GM12878 (cell line): ENCODE measurements at regions of chr7 and their contacts with region 1.

Region 1: GRCh38 chr7:33109005-33109757 is at the start of gene RP9:
- DNase-seq: no peak
- ATAC-seq: peak; percentile 89
- H3K4me3 ChIP-seq: peak within 1 kb of the TSS; percentile 96
- H3K27ac ChIP-seq: peak within 1 kb of the TSS; percentile 45
- H3K4me1 ChIP-seq: peaks cover 11% of the 10 kb centered on the region; the same call in 1 of the 2 replicates
- H3K27me3 ChIP-seq: no peaks in the 10 kb centered on the region; a peak in 1 of 4 replicates
- CTCF ChIP-seq: peak; percentile 36 to 65 (median 52); a peak in 4 of 6 replicates
- EP300 ChIP-seq: no peak
- POLR2A ChIP-seq: peak; percentile 89
- RAD21 ChIP-seq: peak; percentile 34
- polyA plus RNA-seq, gene RP9: 7.6 to 9.6 TPM

Region 2: GRCh38 chr7:32694182-32694581 is 415.0 kb before region 1 on chr7:
- CTCF ChIA-PET with region 1: interaction called, 13 read pairs
- POLR2A ChIA-PET with region 1: no interaction called
- RAD21 ChIA-PET with region 1: interaction called, 4 read pairs
- SMC1A ChIA-PET with region 1: interaction called, 11 read pairs
- in situ Hi-C with region 1: loop called (anchors 10 kb)
- intact Hi-C with region 1: loop called (anchors 2 kb)
- DNase-seq: no peak
- ATAC-seq: no peak
- H3K4me3 ChIP-seq: no peak overlapping the region
- H3K27ac ChIP-seq: no peak overlapping the region
- H3K4me1 ChIP-seq: 0 out of 2 replicates have a peak, but pooled peaks cover 3% of the 10 kb centered on the region
- H3K27me3 ChIP-seq: no peaks in the 10 kb centered on the region
- CTCF ChIP-seq: no peak
- EP300 ChIP-seq: no peak
- POLR2A ChIP-seq: no peak
- RAD21 ChIP-seq: no peak

Region 3: DNA sequence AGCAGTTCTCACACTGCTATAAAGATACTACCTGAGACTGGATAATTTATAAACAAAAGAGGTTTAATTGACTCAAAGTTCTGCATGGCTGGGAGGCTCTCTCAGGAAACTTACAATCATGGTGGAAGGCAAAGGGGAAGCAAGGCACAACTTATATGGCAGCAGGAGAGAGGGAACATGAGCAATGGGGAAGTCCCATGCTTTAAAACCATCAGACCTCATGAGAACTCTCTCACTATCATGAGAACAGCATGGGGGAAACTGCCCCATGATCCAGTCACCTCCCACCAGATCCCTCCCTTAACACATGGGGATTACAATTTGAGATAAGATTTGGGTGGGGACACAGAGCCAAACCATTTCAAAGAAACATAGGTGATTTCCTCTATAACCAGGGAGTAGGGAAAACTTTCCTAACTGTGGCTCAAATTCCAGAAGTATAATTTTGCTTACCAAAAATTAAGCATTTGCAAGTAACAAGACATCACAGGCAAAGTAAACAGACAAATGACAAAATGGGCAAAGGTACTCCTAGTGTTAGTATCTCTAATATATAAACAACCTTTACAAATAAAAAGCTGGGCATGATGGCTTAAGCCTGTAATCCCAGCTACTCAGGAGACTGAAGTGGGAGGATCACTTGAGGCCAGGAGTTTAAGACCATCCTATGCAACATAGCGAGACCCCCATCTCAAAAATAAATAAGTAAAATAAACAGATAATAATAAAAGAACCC is 305.6 kb before region 1 on chr7:
- CTCF ChIA-PET with region 1: interaction called, 25 read pairs
- POLR2A ChIA-PET with region 1: no interaction called
- RAD21 ChIA-PET with region 1: interaction called, 15 read pairs
- SMC1A ChIA-PET with region 1: interaction called, 11 read pairs
- in situ Hi-C with region 1: no loop called
- intact Hi-C with region 1: loop called (anchors 2 kb)
- DNase-seq: no peak
- ATAC-seq: no peak
- H3K4me3 ChIP-seq: no peak overlapping the region
- H3K27ac ChIP-seq: no peak overlapping the region
- H3K4me1 ChIP-seq: no peaks in the 10 kb centered on the region
- H3K27me3 ChIP-seq: no peaks in the 10 kb centered on the region
- CTCF ChIP-seq: no peak
- EP300 ChIP-seq: no peak
- POLR2A ChIP-seq: no peak
- RAD21 ChIP-seq: no peak

Region 4: GRCh38 chr7:32900433-32900995 is 208.7 kb before region 1 on chr7:
- CTCF ChIA-PET with region 1: no interaction called
- POLR2A ChIA-PET with region 1: no interaction called
- RAD21 ChIA-PET with region 1: no interaction called
- SMC1A ChIA-PET with region 1: no interaction called
- in situ Hi-C with region 1: no loop called
- intact Hi-C with region 1: no loop called
- DNase-seq: no peak
- ATAC-seq: no peak
- H3K4me3 ChIP-seq: no peak overlapping the region
- H3K27ac ChIP-seq: no peak overlapping the region
- H3K4me1 ChIP-seq: no peaks in the 10 kb centered on the region
- H3K27me3 ChIP-seq: no peaks in the 10 kb centered on the region
- CTCF ChIP-seq: no peak
- EP300 ChIP-seq: no peak
- POLR2A ChIP-seq: no peak
- RAD21 ChIP-seq: no peak

Region 5: DNA sequence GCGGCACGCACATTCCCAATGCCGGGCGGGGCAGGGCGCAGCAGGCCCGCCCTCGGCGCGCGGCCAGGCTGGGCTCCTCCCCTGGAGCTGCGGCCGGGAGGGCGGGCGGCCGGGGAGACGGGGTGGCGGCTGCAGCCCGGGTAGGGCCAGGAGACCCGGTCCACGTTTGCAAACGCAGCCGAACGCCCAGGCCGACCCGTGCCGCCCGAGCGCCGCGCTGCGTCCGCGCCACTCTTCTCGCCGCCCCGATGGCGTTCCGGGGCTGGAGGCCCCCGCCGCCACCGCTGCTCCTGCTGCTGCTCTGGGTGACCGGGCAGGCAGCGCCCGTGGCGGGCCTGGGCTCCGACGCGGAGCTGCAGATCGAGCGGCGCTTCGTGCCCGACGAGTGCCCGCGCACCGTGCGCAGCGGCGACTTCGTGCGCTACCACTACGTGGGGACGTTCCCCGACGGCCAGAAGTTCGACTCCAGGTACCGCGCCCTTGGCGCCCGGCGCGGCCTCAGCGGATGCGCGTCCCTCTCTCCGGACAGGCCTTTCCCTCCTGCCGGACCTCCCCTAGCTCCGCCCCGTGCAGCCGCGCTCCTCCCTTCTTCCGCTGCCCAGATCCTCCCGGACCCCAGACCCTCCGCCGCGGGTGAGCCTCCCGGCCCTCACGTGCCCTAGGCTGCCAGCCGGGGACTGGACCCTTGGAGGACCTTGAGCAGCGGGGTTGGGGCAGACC is 151.7 kb before region 1 on chr7 and contains the start of gene FKBP9:
- CTCF ChIA-PET with region 1: no interaction called
- POLR2A ChIA-PET with region 1: no interaction called
- RAD21 ChIA-PET with region 1: no interaction called
- SMC1A ChIA-PET with region 1: no interaction called
- in situ Hi-C with region 1: no loop called
- intact Hi-C with region 1: loop called (anchors 5 kb)
- DNase-seq: no peak
- ATAC-seq: peak; percentile 40; the same call in 1 of the 3 replicates
- H3K4me3 ChIP-seq: peak within 1 kb of the TSS; percentile 68
- H3K27ac ChIP-seq: no peak within 1 kb of the TSS
- H3K4me1 ChIP-seq: no peaks in the 10 kb centered on the region
- H3K27me3 ChIP-seq: peaks cover 0 to 5% of the 10 kb centered on the region in 2 experiments; a peak in 2 of 4 replicates
- CTCF ChIP-seq: no peak
- EP300 ChIP-seq: no peak
- POLR2A ChIP-seq: peak; percentile 46
- RAD21 ChIP-seq: no peak
- polyA plus RNA-seq, gene FKBP9: 1.0 to 1.3 TPM

Region 6: DNA sequence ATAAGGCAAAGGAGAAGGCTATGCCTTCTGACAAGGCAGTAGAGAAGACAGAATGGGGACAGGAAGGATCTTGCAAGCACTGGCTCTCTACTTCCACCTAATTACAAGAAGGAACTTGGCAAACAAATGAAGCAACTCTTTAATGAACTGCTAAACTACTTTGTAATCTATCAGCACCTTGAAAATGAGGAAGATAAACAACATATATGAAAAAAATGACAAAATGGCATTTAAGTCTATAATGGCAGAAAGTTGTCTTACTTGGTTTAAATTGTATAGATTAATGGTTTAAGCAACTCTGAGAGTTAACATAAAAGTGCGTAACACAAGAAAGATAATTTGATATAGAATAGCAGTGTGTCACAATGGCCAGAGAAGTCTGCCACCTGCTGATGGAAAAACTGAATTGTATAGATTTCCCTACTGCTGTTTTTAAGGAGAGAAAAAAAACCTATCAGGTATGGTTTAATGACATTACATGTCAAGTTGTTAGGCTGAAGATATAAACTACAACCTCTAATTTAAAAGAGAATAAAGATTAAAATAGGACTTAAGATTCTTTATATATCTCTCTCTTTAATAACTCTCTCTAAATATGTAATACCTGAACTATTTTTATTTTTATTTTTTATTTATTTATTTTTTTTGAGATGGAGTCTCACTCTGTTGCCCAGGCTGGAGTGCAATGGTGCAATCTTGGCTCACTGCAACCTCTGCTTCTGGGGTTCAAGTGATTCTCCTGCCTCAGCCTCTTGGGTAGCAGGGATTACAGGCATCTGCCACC is 58.5 kb before region 1 on chr7:
- CTCF ChIA-PET with region 1: interaction called, 31 read pairs
- POLR2A ChIA-PET with region 1: interaction called, 9 read pairs
- RAD21 ChIA-PET with region 1: interaction called, 12 read pairs
- SMC1A ChIA-PET with region 1: interaction called, 16 read pairs
- in situ Hi-C with region 1: no loop called
- intact Hi-C with region 1: no loop called
- DNase-seq: no peak
- ATAC-seq: peak; percentile 67
- H3K4me3 ChIP-seq: peak overlapping the region; percentile 25; the same call in 1 of the 2 replicates
- H3K27ac ChIP-seq: peak overlapping the region; percentile 56; the same call in 1 of the 2 replicates
- H3K4me1 ChIP-seq: peaks cover 21% of the 10 kb centered on the region
- H3K27me3 ChIP-seq: no peaks in the 10 kb centered on the region
- CTCF ChIP-seq: peak; percentile 50 to 62 (median 58)
- EP300 ChIP-seq: no peak
- POLR2A ChIP-seq: no peak
- RAD21 ChIP-seq: peak; percentile 69

Region 7: DNA sequence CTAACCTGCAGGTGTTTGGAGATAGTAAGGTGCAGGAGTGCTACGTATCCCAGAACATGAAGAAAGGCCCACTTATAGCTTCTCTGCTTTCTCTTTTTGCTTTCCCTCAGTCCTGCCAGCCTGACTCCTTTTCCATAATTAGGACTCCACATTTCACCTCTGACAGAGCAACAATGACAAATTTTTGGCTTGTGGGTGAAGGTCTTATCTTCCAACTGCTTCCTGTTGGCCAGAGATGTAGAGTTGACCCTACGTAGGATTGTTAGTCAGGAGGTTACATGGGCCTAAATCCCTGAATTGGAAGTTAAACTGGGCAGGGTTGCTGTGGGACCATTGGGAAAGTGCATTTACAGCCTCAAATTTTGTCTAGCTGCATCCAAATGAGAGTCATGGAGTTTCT is 21.3 kb before region 1 on chr7:
- CTCF ChIA-PET with region 1: interaction called, 14 read pairs
- POLR2A ChIA-PET with region 1: no interaction called
- RAD21 ChIA-PET with region 1: no interaction called
- SMC1A ChIA-PET with region 1: interaction called, 5 read pairs
- in situ Hi-C with region 1: no loop called
- intact Hi-C with region 1: no loop called
- DNase-seq: no peak
- ATAC-seq: no peak
- H3K4me3 ChIP-seq: no peak overlapping the region
- H3K27ac ChIP-seq: no peak overlapping the region
- H3K4me1 ChIP-seq: no peaks in the 10 kb centered on the region
- H3K27me3 ChIP-seq: no peaks in the 10 kb centered on the region
- CTCF ChIP-seq: no peak
- EP300 ChIP-seq: no peak
- POLR2A ChIP-seq: no peak
- RAD21 ChIP-seq: no peak

Region 8: DNA sequence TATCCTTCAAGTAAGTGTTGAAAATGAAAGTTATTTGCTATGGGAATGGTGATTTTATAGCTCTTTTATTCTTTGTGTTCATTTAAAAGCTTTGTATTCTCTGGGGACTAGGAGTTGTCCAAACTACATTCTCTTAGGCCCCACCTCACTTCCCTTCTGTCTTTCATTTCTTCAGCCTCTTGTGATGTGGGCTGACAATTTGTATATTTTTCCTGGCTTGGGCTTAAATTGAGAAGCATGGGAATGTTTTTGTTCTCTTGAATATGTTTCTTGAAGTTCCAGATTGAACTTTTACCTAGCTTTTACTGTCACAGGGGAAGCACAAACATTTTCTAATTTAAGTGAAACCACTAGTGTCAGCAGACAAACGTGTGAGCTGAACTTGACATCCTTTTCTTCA is 48.1 kb after region 1 on chr7:
- CTCF ChIA-PET with region 1: no interaction called
- POLR2A ChIA-PET with region 1: no interaction called
- RAD21 ChIA-PET with region 1: no interaction called
- SMC1A ChIA-PET with region 1: no interaction called
- in situ Hi-C with region 1: no loop called
- intact Hi-C with region 1: no loop called
- DNase-seq: no peak
- ATAC-seq: no peak
- H3K4me3 ChIP-seq: no peak overlapping the region
- H3K27ac ChIP-seq: no peak overlapping the region
- H3K4me1 ChIP-seq: no peaks in the 10 kb centered on the region
- H3K27me3 ChIP-seq: no peaks in the 10 kb centered on the region
- CTCF ChIP-seq: no peak
- EP300 ChIP-seq: no peak
- POLR2A ChIP-seq: no peak
- RAD21 ChIP-seq: no peak

Region 9: DNA sequence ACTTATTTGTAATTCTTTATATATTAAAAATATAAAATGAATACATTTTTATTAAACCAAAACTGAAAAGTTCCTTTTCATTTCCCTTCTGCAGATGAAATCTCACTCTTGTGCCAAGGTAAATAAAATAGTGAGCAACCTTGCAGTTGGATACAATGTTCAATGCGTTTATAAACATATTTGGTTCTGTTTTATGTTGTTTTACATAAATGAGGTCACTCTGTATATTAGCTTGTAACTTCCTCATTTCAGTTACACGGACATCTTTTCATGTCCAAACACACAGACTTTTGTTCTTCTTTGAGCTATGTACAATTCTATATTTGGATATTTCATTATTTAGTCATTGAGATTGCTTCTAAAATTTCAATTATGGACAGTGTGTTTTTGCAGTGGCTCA is 127.9 kb after region 1 on chr7:
- CTCF ChIA-PET with region 1: no interaction called
- POLR2A ChIA-PET with region 1: no interaction called
- RAD21 ChIA-PET with region 1: no interaction called
- SMC1A ChIA-PET with region 1: no interaction called
- in situ Hi-C with region 1: no loop called
- intact Hi-C with region 1: no loop called
- DNase-seq: no peak
- ATAC-seq: peak; percentile 74
- H3K4me3 ChIP-seq: no peak overlapping the region
- H3K27ac ChIP-seq: no peak overlapping the region
- H3K4me1 ChIP-seq: no peaks in the 10 kb centered on the region
- H3K27me3 ChIP-seq: no peaks in the 10 kb centered on the region
- CTCF ChIP-seq: no peak
- EP300 ChIP-seq: no peak
- POLR2A ChIP-seq: no peak
- RAD21 ChIP-seq: no peak

Region 10: DNA sequence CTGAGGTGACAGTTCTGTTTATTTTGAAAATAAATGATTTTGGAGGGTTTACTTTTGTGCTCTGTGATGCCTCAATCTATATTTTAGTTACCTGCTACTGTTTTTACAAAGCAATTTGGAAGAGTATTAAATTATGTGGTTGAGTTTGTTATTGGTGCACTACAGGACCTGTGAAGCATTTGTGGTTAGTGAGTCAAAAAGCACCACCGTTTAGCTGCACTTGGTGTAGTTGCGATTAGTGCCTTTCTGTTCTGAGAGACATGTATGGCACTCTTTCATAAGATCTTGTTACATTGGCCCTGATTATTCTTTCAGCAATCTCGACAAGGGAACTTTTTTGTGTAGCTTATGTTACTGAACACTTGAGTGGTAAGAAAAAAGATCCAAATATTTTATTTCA is 152.4 kb after region 1 on chr7:
- CTCF ChIA-PET with region 1: no interaction called
- POLR2A ChIA-PET with region 1: no interaction called
- RAD21 ChIA-PET with region 1: no interaction called
- SMC1A ChIA-PET with region 1: no interaction called
- in situ Hi-C with region 1: no loop called
- intact Hi-C with region 1: no loop called
- DNase-seq: peak; percentile 5
- ATAC-seq: peak; percentile 93
- H3K4me3 ChIP-seq: no peak overlapping the region
- H3K27ac ChIP-seq: no peak overlapping the region
- H3K4me1 ChIP-seq: no peaks in the 10 kb centered on the region; the same call in 1 of the 2 replicates
- H3K27me3 ChIP-seq: no peaks in the 10 kb centered on the region
- CTCF ChIP-seq: no peak
- EP300 ChIP-seq: no peak
- POLR2A ChIP-seq: no peak
- RAD21 ChIP-seq: no peak